CD14-positive monocyte (primary cell): ENCODE measurements at regions of chr10 and their contacts with region 1.

Region 1: DNA sequence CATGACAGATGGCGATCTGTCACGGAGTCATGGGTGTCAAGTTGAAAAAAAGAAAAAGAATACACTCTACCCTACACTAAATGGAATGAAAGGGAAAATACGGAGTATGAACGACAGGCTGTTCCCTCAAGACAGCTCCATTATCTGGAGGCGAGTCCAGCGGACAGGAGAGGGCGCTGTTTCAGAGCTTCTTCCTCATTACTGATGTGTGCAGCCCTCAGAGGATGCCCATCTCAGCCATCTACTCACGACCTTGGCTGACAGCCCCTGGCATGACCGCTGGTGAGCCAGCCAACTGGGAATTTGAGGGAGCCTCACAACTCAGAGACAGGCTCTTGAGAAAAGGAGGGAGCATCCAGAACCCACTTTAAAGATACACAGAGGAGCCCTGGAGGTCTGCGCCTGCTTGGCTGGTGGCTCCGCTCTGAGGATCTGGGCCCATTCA is 49.6 kb upstream of the SMNDC1 start:
- DNase-seq: peak; percentile 31 to 74 (median 66)
- H3K4me3 ChIP-seq: no peak overlapping the region
- H3K4me3 Mint-ChIP-seq: peak overlapping the region in 1 of 2 donors; percentile 62
- H3K27ac ChIP-seq: no peak overlapping the region
- H3K27ac Mint-ChIP-seq: peak overlapping the region in 1 of 7 donors; percentile 56
- H3K4me1 ChIP-seq: no peaks in the 10 kb centered on the region
- H3K4me1 Mint-ChIP-seq: peaks cover 10% of the 10 kb centered on the region
- H3K27me3 ChIP-seq: no peaks in the 10 kb centered on the region
- H3K27me3 Mint-ChIP-seq: peaks cover 5 to 7% (median 7%) of the 10 kb centered on the region in 3 donors
- CTCF ChIP-seq: peak; percentile 85

Region 2: GRCh38 chr10:110311357-110311949 is 42.9 kb before region 1 on chr10:
- intact Hi-C with region 1: loop called in 1 of 2 experiments (anchors 5 kb)
- DNase-seq: peak; percentile 26 to 60 (median 49)
- H3K4me3 ChIP-seq: no peak overlapping the region
- H3K4me3 Mint-ChIP-seq: no peak overlapping the region
- H3K27ac ChIP-seq: no peak overlapping the region
- H3K27ac Mint-ChIP-seq: no peak overlapping the region
- H3K4me1 ChIP-seq: peaks cover 5 to 11% of the 10 kb centered on the region in 2 donors
- H3K4me1 Mint-ChIP-seq: peaks cover 15% of the 10 kb centered on the region
- H3K27me3 ChIP-seq: no peaks in the 10 kb centered on the region
- H3K27me3 Mint-ChIP-seq: peaks cover 3 to 5% (median 5%) of the 10 kb centered on the region in 3 donors
- CTCF ChIP-seq: peak; percentile 71

Region 3: GRCh38 chr10:110414563-110415309 is 60.4 kb after region 1 on chr10:
- intact Hi-C with region 1: loop called in 1 of 2 experiments (anchors 5 kb)
- DNase-seq: peak; percentile 79 to 98 (median 88)
- H3K4me3 ChIP-seq: peak overlapping the region in 1 of 3 experiments; percentile 35
- H3K4me3 Mint-ChIP-seq: peak overlapping the region; percentile 17 to 38
- H3K27ac ChIP-seq: peak overlapping the region; percentile 3 to 65
- H3K27ac Mint-ChIP-seq: peak overlapping the region; percentile 19 to 89 (median 72)
- H3K4me1 ChIP-seq: peaks cover 44 to 61% of the 10 kb centered on the region in 2 donors
- H3K4me1 Mint-ChIP-seq: peaks cover 62% of the 10 kb centered on the region
- H3K27me3 ChIP-seq: no peaks in the 10 kb centered on the region
- H3K27me3 Mint-ChIP-seq: peaks cover 1 to 12% (median 3%) of the 10 kb centered on the region in 3 donors
- CTCF ChIP-seq: no peak

Region 4: GRCh38 chr10:110547139-110547761 is 192.9 kb after region 1 on chr10:
- intact Hi-C with region 1: loop called (anchors 1 to 5 kb)
- DNase-seq: peak; percentile 37 to 67 (median 66)
- H3K4me3 ChIP-seq: no peak overlapping the region
- H3K4me3 Mint-ChIP-seq: no peak overlapping the region
- H3K27ac ChIP-seq: no peak overlapping the region
- H3K27ac Mint-ChIP-seq: no peak overlapping the region
- H3K4me1 ChIP-seq: no peaks in the 10 kb centered on the region
- H3K4me1 Mint-ChIP-seq: peaks cover 2% of the 10 kb centered on the region
- H3K27me3 ChIP-seq: no peaks in the 10 kb centered on the region
- H3K27me3 Mint-ChIP-seq: peaks cover 2 to 6% (median 3%) of the 10 kb centered on the region in 3 donors
- CTCF ChIP-seq: peak; percentile 83